ENCODE measurements at regions of chr15 and their contacts with region 1.

Region 1: GRCh38 chr15:72585476-72586082 is 68.9 kb upstream of the GOLGA6B start:
- DNase-seq: peak; percentile 28
- ATAC-seq: peak; percentile 38; the same call in 1 of the 2 replicates
- H3K4me3 ChIP-seq: no peak overlapping the region
- H3K27ac ChIP-seq: no peak overlapping the region
- H3K4me1 ChIP-seq: no peaks in the 10 kb centered on the region
- H3K27me3 ChIP-seq: no peaks in the 10 kb centered on the region
- CTCF ChIP-seq: peak; percentile 31; the same call in 1 of the 2 replicates
- POLR2A ChIP-seq: no peak
- RAD21 ChIP-seq: peak; percentile 32; the same call in 1 of the 2 replicates

Region 2: GRCh38 chr15:72312605-72313447 is 272.8 kb before region 1 on chr15:
- CTCF ChIA-PET with region 1: interaction called, 3 read pairs
- POLR2A ChIA-PET with region 1: no interaction called
- dilution Hi-C with region 1: no loop called
- in situ Hi-C with region 1: no loop called
- intact Hi-C with region 1: loop called (anchors 1 kb)
- DNase-seq: peak; percentile 62
- ATAC-seq: peak; percentile 100
- H3K4me3 ChIP-seq: no peak overlapping the region
- H3K27ac ChIP-seq: no peak overlapping the region
- H3K4me1 ChIP-seq: no peaks in the 10 kb centered on the region
- H3K27me3 ChIP-seq: peaks cover 27% of the 10 kb centered on the region
- CTCF ChIP-seq: peak; percentile 82
- POLR2A ChIP-seq: no peak
- RAD21 ChIP-seq: peak; percentile 85

Region 3: DNA sequence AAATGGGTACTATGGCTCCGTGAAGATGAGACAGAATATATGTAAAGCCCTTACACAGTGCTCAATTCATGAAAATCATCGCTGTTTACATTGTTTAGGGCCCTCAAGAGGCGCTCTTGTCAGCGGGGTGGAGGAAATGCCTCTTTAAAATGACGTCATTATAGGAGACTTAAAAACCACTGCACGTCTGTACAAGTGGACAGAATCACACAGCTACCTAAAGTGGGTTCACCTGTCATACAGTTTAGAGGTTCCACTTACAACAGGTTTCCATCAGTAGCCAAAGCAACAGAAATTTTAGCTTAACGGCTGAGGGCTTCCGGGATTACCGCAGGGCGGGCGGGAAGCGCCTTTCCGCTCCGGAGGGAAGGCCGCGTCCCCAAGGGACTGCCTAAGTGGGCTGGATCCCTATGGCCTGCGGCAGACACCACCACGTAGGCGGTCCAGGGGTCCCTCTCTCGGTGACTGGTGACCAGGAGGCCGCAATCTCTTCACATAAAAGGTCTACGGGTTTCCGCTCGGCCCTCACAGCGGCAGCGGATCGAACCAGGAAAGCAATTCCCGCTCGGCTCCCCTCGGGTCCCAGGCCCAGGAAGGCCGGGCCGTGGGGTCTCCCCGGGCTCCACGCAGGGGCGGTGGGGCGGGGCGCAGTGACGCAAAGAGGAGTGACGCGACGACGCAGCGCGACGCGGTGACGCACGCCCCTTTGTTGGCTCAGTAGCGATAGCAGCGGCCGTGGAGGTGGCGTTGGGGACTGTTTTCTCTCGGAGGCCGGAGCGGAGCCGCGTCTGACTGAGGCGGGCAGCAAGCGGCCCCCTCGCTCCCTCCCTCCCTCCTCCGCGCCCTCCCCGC is 111.7 kb before region 1 on chr15 and contains the start of gene ARIH1:
- CTCF ChIA-PET with region 1: no interaction called
- POLR2A ChIA-PET with region 1: no interaction called
- dilution Hi-C with region 1: no loop called
- in situ Hi-C with region 1: no loop called
- intact Hi-C with region 1: loop called (anchors 5 kb)
- DNase-seq: peak; percentile 94
- ATAC-seq: peak; percentile 88
- H3K4me3 ChIP-seq: peak within 1 kb of the TSS; percentile 97
- H3K27ac ChIP-seq: peak within 1 kb of the TSS; percentile 98
- H3K4me1 ChIP-seq: peaks cover 2% of the 10 kb centered on the region
- H3K27me3 ChIP-seq: no peaks in the 10 kb centered on the region
- CTCF ChIP-seq: peak; percentile 53
- POLR2A ChIP-seq: peak; percentile 95
- RAD21 ChIP-seq: peak; percentile 45
- total RNA-seq, gene ARIH1: 41.2 and 41.9 TPM in 2 replicates

Region 4: DNA sequence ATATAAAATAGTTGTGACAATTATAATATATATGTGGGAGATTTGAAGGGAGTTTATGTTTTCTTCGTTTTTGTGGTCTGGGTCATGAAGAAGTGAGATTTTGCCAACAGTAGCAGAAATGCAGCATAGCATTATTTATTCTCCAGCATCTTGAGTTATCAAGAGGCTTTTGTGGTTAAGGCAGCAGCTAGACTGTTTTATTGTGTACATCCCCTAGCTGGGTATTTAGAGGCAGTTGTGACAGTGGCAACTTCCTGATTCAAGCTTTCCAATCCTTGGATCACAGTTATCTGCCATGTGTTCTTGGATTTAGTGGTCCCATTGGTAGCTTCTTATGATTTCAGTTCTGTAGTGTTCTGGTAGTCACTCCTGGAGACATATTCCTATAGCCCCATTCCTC is 82.4 kb before region 1 on chr15:
- CTCF ChIA-PET with region 1: no interaction called
- POLR2A ChIA-PET with region 1: no interaction called
- dilution Hi-C with region 1: no loop called
- in situ Hi-C with region 1: no loop called
- intact Hi-C with region 1: no loop called
- DNase-seq: no peak
- ATAC-seq: no peak
- H3K4me3 ChIP-seq: no peak overlapping the region
- H3K27ac ChIP-seq: no peak overlapping the region
- H3K4me1 ChIP-seq: no peaks in the 10 kb centered on the region
- H3K27me3 ChIP-seq: no peaks in the 10 kb centered on the region
- CTCF ChIP-seq: no peak
- POLR2A ChIP-seq: no peak
- RAD21 ChIP-seq: no peak